Activated CD4-positive, alpha-beta memory T cell treated with anti-CD3 and anti-CD28 coated beads for 36 hours (primary cell): ENCODE measurements at regions of chr15 and their contacts with region 1.

Region 1: DNA sequence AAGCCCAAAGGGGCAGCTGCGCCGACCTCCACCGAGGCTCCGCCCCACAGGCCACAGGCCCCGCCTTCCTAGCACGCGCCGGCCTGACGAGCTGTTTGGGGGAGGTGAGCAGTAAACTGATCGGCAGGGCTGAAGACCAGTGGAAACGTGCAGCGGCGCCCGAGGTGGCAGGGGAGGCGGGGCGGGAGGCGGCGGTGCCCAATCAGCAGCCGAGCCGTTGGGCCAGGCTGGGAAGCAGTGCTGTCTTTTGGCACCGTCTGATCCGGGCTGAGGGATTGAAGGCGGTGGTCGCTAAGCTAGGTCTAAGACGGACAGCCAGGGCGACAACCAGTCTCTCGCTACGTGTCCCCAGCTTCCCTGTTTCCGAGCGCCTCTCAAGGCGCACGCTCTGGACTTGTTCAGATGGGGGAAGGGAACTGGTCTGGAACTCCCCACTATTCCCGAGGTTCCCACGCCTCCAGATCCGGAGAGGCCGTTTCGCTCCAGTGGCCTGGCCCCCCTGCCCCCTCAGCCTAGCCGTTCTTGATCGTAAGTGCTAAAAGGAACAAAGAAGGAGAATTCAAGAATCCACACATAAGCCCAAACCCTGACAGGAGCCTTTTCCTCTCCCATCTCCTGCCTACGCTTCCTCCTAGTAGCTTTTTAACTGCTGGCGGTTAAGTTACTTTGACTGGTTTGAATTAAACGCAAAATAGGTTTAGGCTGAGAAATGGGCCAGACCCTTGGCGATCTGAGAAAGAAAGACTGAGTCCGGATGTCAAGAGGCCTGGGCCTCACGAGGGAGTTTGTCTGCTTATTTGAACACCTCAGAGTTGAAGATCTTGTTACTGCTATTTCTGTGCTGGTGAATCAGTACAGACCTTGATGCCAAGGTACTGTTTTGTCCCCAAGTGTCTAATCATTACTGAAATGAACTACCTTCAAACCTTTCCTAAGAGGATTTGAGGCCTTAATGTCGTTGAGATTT is at the start of gene FMN1:
- DNase-seq: peak; percentile 93
- H3K4me3 Mint-ChIP-seq: peak within 1 kb of the TSS; percentile 67
- H3K27ac Mint-ChIP-seq: peak within 1 kb of the TSS; percentile 35
- H3K4me1 Mint-ChIP-seq: peaks cover 20% of the 10 kb centered on the region
- H3K27me3 Mint-ChIP-seq: peaks cover 28% of the 10 kb centered on the region
- total RNA-seq, gene FMN1: 0.05 TPM in 1 of 2 experiments, not detected in the other

Region 2: GRCh38 chr15:33163816-33164215 is 31.2 kb before region 1 on chr15:
- CTCF ChIA-PET with region 1: no interaction called
- POLR2A ChIA-PET with region 1: no interaction called
- intact Hi-C with region 1: loop called (anchors 1 kb)
- DNase-seq: no peak
- H3K4me3 Mint-ChIP-seq: no peak overlapping the region
- H3K27ac Mint-ChIP-seq: no peak overlapping the region
- H3K4me1 Mint-ChIP-seq: peaks cover 3% of the 10 kb centered on the region
- H3K27me3 Mint-ChIP-seq: peaks cover 14% of the 10 kb centered on the region

Region 3: DNA sequence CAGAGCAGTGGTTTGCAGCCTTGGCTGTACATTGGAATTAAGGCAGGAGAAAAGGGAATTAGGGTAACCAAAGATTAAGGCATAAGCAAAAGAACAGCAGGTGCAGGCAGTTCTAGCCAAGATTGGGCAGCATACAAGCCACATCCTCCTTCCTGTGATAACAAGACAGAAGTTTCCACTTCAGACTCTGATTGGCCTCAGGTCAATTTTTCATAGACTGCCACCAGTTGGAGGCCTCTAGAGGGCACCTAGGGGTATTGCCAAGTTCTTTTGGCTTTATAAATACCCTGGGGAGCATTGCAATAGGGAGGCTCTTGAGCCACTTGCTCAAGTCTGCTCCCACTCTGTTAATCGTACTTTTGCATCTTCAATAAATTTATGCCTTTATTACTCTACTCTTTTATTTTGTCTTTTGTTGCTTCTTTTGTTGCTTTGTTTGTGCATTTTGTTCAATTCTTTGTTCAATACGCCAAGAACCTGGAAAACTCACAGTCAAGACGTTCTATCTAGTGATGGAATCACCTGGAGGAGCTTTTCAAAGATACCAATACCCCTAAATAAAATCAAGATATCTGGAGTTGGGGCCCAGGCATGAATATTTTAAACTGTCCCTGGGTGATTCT is 31.7 kb after region 1 on chr15:
- CTCF ChIA-PET with region 1: no interaction called
- POLR2A ChIA-PET with region 1: no interaction called
- intact Hi-C with region 1: no loop called
- DNase-seq: peak; percentile 65
- H3K4me3 Mint-ChIP-seq: no peak overlapping the region
- H3K27ac Mint-ChIP-seq: no peak overlapping the region
- H3K4me1 Mint-ChIP-seq: peaks cover 11% of the 10 kb centered on the region
- H3K27me3 Mint-ChIP-seq: no peaks in the 10 kb centered on the region